ENCODE measurements at regions of chr18 and their contacts with region 1.

Region 1: DNA sequence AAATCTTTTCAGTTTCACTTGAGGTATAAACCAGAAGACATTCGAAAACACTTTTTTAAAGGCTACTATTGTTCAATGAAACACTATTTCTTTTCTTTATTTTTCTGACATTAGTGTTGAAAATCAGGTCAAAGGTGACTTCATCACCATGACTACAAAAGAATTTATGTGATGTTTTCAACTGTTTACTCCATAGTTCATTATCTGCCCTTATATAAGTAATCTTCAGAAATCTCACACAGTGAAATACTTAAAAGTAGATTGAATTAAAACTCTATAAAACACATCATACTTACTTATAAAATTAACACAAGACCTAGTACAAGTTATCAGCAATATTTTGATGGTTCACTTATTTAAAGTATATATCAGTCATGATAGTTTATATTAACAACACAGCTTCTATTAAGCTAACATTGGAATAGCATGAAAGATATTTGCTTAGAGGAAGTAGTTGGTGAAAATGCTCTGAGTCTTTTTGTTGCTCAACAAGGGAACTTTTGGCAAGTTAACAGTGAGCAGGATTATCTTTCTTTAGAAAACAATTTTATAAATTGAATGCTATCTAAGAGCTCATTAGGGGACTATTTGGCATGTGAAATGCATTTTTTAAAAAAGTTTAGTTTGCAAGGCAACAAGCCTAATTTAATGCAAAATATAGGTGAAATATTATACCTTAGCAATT is 60.8 kb downstream of the MC4R start:
- H3K4me3 Mint-ChIP-seq: no peak overlapping the region
- H3K27ac Mint-ChIP-seq: no peak overlapping the region
- H3K4me1 Mint-ChIP-seq: no peaks in the 10 kb centered on the region
- H3K27me3 Mint-ChIP-seq: no peaks in the 10 kb centered on the region

Region 2: GRCh38 chr18:60259052-60259681 is 52.7 kb before region 1 on chr18:
- intact Hi-C with region 1: loop called (anchors 10 kb)
- H3K4me3 Mint-ChIP-seq: no peak overlapping the region
- H3K27ac Mint-ChIP-seq: no peak overlapping the region
- H3K4me1 Mint-ChIP-seq: peaks cover 7% of the 10 kb centered on the region
- H3K27me3 Mint-ChIP-seq: no peaks in the 10 kb centered on the region

Region 3: DNA sequence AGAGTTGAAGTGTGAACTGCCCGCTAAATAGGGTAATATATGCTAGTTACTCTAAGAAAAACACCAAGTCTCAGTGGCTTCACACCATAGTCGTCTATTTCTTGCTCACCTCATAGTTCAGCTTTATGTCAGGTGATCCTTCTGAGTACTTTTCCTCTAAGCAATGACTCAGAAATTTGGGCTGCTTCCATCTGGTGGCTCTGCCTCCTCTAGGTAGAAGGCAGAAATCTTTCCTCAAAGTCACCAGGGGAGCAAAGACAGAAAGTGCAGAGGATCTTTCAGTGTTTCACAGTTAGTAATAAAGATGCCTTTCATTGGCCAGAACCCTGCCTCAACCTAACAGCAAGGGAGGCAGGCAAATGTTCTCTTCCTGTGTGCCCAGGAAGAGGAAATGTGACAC is 1038.8 kb after region 1 on chr18:
- intact Hi-C with region 1: no loop called
- H3K4me3 Mint-ChIP-seq: no peak overlapping the region
- H3K27ac Mint-ChIP-seq: no peak overlapping the region
- H3K4me1 Mint-ChIP-seq: no peaks in the 10 kb centered on the region
- H3K27me3 Mint-ChIP-seq: no peaks in the 10 kb centered on the region